ENCODE measurements at regions of chr2 and their contacts with region 1.

Region 1: DNA sequence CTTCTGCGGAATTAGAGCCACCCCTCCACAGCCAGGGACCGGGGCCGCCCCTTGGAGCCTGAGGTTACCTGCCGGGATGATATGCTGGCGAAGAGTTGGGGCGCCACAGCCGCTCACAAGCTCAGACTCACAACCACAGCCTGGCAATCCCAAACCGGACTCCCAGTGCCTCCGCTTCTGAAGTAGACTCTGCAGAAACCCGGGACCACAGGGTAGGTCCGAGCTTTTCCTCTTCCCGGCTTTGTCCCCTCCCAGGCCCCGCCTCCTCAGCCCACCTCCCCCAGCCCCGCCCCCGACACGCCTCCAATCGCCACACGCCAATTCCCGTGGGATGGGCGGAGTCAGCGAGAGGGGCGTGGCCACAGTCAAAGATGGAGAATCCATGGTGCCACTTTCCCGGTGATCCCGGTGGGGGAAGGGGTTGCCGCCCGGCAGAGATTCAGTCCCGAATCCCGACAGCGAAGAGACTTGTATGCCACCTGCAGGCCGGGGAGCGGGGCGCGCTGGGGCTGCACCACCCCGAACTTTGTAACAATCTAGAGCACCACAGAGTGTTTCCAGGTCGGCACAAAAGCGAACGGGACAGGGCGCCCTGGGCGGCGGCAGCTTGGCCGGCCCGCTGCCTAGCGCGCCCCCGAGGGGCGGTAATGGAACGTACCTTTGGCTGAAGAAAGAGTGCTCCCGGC is at the start of gene IDH1:
- DNase-seq: peak; percentile 85 to 92 (median 88)
- H3K4me3 ChIP-seq: peak within 1 kb of the TSS; percentile 91 to 92
- H3K4me3 Mint-ChIP-seq: peak within 1 kb of the TSS; percentile 93 to 100 (median 98)
- H3K27ac ChIP-seq: peak within 1 kb of the TSS; percentile 43
- H3K27ac Mint-ChIP-seq: peak within 1 kb of the TSS; percentile 79 to 94 (median 86)
- H3K4me1 ChIP-seq: peaks cover 14% of the 10 kb centered on the region
- H3K4me1 Mint-ChIP-seq: peaks cover 12 to 32% (median 18%) of the 10 kb centered on the region in 4 donors
- H3K27me3 ChIP-seq: no peaks in the 10 kb centered on the region
- H3K27me3 Mint-ChIP-seq: no peaks in the 10 kb centered on the region
- total RNA-seq, gene IDH1: 25.6 to 25.9 TPM

Region 2: DNA sequence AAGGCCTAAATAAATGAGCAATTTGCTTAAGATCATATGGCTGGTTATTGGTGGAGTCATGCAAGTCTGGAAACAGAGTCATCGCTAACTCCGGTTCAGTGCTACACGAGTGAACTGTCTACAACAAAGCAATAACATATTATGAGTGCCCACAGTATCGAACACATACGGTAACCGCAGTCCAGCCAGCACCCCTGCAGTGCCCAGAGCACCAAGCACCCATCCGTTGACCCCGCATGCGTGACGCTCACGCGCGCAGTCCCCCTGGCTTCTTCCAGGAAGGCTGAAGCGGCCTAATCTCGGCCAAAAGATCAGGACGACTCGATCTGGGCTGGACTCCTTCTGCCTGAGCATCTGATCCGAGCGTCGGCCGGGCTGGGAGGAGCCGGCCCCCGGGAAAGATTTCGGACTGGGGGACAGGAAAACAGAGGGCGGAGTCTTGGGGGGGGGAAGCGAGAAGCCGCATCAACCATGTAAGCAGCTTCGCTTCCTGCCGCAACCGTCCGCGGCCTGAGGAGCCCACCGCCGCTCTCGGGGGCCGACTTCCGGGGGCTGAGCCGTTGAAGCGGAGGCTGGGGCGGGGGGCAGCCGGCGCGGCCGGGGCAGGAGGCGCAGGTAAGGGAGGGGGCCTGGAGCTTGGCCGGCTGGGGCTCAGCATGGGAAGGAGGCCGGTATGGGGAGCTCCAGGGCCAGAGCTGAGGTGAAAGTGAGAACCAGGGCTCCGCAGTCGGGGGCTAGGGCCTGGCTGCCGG is 11.0 kb after region 1 on chr2 and contains the start of gene PIKFYVE:
- CTCF ChIA-PET with region 1: interaction called, 138 read pairs
- POLR2A ChIA-PET with region 1: interaction called, 94 read pairs
- intact Hi-C with region 1: loop called (anchors 1 kb)
- DNase-seq: peak; percentile 80 to 92 (median 87)
- H3K4me3 ChIP-seq: peak within 1 kb of the TSS; percentile 51 to 95
- H3K4me3 Mint-ChIP-seq: peak within 1 kb of the TSS; percentile 92 to 99 (median 96)
- H3K27ac ChIP-seq: peak within 1 kb of the TSS; percentile 75
- H3K27ac Mint-ChIP-seq: peak within 1 kb of the TSS; percentile 86 to 97 (median 95)
- H3K4me1 ChIP-seq: peaks cover 46% of the 10 kb centered on the region
- H3K4me1 Mint-ChIP-seq: peaks cover 27 to 60% (median 39%) of the 10 kb centered on the region in 4 donors
- H3K27me3 ChIP-seq: no peaks in the 10 kb centered on the region
- H3K27me3 Mint-ChIP-seq: no peaks in the 10 kb centered on the region
- total RNA-seq, gene PIKFYVE: 44.5 to 45.8 TPM